Activated naive CD4-positive, alpha-beta T cell treated with anti-CD3 and anti-CD28 coated beads for 36 hours (primary cell): ENCODE measurements at regions of chr9 and their contacts with region 1.

Region 1: GRCh38 chr9:129641746-129642513 is at the start of gene ASB6:
- DNase-seq: peak; percentile 92
- H3K4me3 Mint-ChIP-seq: peak within 1 kb of the TSS; percentile 78
- H3K27ac Mint-ChIP-seq: peak within 1 kb of the TSS; percentile 83
- H3K4me1 Mint-ChIP-seq: peaks cover 19% of the 10 kb centered on the region
- H3K27me3 Mint-ChIP-seq: no peaks in the 10 kb centered on the region
- total RNA-seq, gene ASB6: 13.0 to 13.8 TPM

Region 2: GRCh38 chr9:129626079-129626624 is 15.8 kb before region 1 on chr9 and contains the start of gene NTMT1:
- CTCF ChIA-PET with region 1: interaction called, 14 read pairs
- intact Hi-C with region 1: loop called (anchors 1 kb)
- DNase-seq: peak; percentile 92
- H3K4me3 Mint-ChIP-seq: peak within 1 kb of the TSS; percentile 77
- H3K27ac Mint-ChIP-seq: peak within 1 kb of the TSS; percentile 93
- H3K4me1 Mint-ChIP-seq: peaks cover 59% of the 10 kb centered on the region
- H3K27me3 Mint-ChIP-seq: peaks cover 14% of the 10 kb centered on the region
- total RNA-seq, gene NTMT1: 58.6 to 59.3 TPM

Region 3: GRCh38 chr9:129726322-129727160 is 84.6 kb after region 1 on chr9:
- CTCF ChIA-PET with region 1: interaction called, 15 read pairs
- intact Hi-C with region 1: loop called (anchors 2 kb)
- DNase-seq: peak; percentile 76
- H3K4me3 Mint-ChIP-seq: peak overlapping the region; percentile 36
- H3K27ac Mint-ChIP-seq: no peak overlapping the region
- H3K4me1 Mint-ChIP-seq: peaks cover 2% of the 10 kb centered on the region
- H3K27me3 Mint-ChIP-seq: no peaks in the 10 kb centered on the region

Region 4: DNA sequence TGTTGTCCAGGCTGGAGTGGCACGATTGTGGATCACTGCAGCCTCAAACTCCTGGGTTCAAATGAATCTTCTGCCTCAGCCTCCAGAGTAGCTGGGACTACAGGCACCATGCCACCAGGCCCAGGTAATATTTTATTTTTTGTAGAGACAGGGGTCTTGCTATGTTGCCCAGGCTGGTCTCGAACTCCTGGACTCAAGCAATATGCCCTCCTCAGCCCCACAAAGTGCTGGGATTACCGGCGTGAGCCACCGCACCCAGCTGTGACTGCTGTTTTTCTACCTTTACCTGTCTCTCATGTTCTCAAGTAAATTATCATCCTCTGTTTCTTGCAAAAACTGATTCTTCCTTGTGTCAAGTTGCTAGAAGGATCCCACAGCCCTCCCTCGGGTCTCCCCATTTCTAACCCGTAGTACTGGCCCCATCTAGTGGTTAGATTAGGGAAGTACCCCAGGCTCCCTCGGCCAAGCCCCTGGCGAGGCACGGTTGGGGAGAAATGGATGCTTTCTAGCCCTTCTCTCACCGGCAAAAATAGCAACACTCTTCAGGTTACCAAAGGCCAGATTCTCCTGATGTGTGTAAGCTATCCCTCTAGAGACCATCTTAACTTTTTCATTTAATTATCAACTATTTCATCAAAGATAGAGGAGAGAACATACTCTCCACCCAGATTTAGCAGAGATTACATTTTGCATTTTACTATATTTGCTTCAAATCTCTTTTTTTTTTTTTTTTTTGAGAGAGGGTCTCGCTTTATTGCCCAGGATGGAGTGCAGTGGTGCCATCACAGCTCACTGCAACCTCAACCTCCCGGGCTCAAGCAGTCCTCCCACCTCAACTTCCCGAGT is 141.8 kb after region 1 on chr9:
- CTCF ChIA-PET with region 1: interaction called, 3 read pairs
- intact Hi-C with region 1: loop called (anchors 1 kb)
- DNase-seq: peak; percentile 85
- H3K4me3 Mint-ChIP-seq: no peak overlapping the region
- H3K27ac Mint-ChIP-seq: no peak overlapping the region
- H3K4me1 Mint-ChIP-seq: peaks cover 5% of the 10 kb centered on the region
- H3K27me3 Mint-ChIP-seq: no peaks in the 10 kb centered on the region

Region 5: GRCh38 chr9:129854588-129855110 is 212.7 kb after region 1 on chr9:
- CTCF ChIA-PET with region 1: no interaction called
- intact Hi-C with region 1: no loop called
- DNase-seq: peak; percentile 27
- H3K4me3 Mint-ChIP-seq: no peak overlapping the region
- H3K27ac Mint-ChIP-seq: peak overlapping the region; percentile 65
- H3K4me1 Mint-ChIP-seq: peaks cover 39% of the 10 kb centered on the region
- H3K27me3 Mint-ChIP-seq: no peaks in the 10 kb centered on the region

Region 6: GRCh38 chr9:130186839-130187522 is 545.1 kb after region 1 on chr9:
- CTCF ChIA-PET with region 1: no interaction called
- intact Hi-C with region 1: no loop called
- DNase-seq: no peak
- H3K4me3 Mint-ChIP-seq: no peak overlapping the region
- H3K27ac Mint-ChIP-seq: no peak overlapping the region
- H3K4me1 Mint-ChIP-seq: peaks cover 2% of the 10 kb centered on the region
- H3K27me3 Mint-ChIP-seq: no peaks in the 10 kb centered on the region

Region 7: DNA sequence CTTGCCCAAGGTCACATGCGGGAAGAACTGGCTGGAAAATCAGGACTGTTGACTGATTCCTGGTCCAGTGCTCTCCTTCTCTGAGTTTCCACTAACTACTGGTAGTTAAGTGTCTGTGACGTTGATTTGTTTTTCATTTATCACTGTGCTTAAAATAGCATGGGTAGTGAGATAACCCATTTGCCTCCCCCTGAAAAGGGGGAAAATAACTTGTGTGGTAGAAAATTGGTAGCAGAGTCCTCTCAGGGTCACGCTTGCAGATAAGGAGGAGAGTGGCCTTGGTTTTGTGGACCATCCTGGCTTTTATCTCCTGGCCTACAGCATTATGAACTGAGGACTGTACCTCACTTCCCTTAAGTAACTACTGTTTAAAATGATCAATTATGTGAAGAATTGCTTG is 948.4 kb after region 1 on chr9:
- CTCF ChIA-PET with region 1: no interaction called
- intact Hi-C with region 1: no loop called
- DNase-seq: no peak
- H3K4me3 Mint-ChIP-seq: no peak overlapping the region
- H3K27ac Mint-ChIP-seq: no peak overlapping the region
- H3K4me1 Mint-ChIP-seq: peaks cover 12% of the 10 kb centered on the region
- H3K27me3 Mint-ChIP-seq: no peaks in the 10 kb centered on the region